ENCODE measurements at regions of chr10 and their contacts with region 1.

Region 1: GRCh38 chr10:74576586-74576985 is 249.8 kb upstream of the KAT6B start:
- DNase-seq: no peak
- ATAC-seq: no peak
- H3K4me3 ChIP-seq: no peak overlapping the region
- H3K27ac ChIP-seq: no peak overlapping the region
- H3K4me1 ChIP-seq: no peaks in the 10 kb centered on the region
- H3K27me3 ChIP-seq: no peaks in the 10 kb centered on the region
- CTCF ChIP-seq: no peak
- EP300 ChIP-seq: no peak
- POLR2A ChIP-seq: no peak
- RAD21 ChIP-seq: no peak

Region 2: DNA sequence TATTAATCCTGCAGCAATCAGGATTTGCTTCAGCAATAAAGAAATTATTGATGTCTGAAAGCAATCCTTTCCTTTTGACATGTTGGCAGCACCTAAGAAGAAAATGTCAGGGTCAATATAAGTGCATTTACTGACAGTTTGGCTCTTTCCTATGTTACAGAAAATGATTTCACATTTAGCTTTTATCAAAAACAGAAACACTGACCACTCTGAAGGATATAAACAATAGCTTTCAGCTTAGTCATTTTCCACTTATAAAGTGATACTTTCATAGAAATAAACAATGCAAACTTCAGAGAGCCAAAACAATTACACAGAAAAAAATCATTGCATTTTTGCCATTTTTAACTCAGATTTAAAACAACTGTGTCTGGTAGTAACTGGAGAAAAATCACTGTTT is 75.8 kb before region 1 on chr10:
- CTCF ChIA-PET with region 1: no interaction called
- POLR2A ChIA-PET with region 1: no interaction called
- in situ Hi-C with region 1: no loop called
- intact Hi-C with region 1: loop called (anchors 2 kb)
- DNase-seq: no peak
- ATAC-seq: no peak
- H3K4me3 ChIP-seq: no peak overlapping the region
- H3K27ac ChIP-seq: no peak overlapping the region
- H3K4me1 ChIP-seq: peaks cover 4% of the 10 kb centered on the region; the same call in 1 of the 2 replicates
- H3K27me3 ChIP-seq: no peaks in the 10 kb centered on the region
- CTCF ChIP-seq: no peak
- EP300 ChIP-seq: no peak
- POLR2A ChIP-seq: no peak
- RAD21 ChIP-seq: no peak

Region 3: GRCh38 chr10:74598891-74599566 is 22.4 kb after region 1 on chr10:
- CTCF ChIA-PET with region 1: no interaction called
- POLR2A ChIA-PET with region 1: no interaction called
- in situ Hi-C with region 1: no loop called
- intact Hi-C with region 1: no loop called
- DNase-seq: no peak
- ATAC-seq: no peak
- H3K4me3 ChIP-seq: no peak overlapping the region
- H3K27ac ChIP-seq: no peak overlapping the region
- H3K4me1 ChIP-seq: no peaks in the 10 kb centered on the region
- H3K27me3 ChIP-seq: no peaks in the 10 kb centered on the region; a peak in 1 of 5 replicates
- CTCF ChIP-seq: no peak
- EP300 ChIP-seq: no peak
- POLR2A ChIP-seq: no peak
- RAD21 ChIP-seq: no peak

Measured in HepG2 (cell line).